SK-N-SH (cell line): ENCODE measurements at regions of chr4 and their contacts with region 1.

Region 1: DNA sequence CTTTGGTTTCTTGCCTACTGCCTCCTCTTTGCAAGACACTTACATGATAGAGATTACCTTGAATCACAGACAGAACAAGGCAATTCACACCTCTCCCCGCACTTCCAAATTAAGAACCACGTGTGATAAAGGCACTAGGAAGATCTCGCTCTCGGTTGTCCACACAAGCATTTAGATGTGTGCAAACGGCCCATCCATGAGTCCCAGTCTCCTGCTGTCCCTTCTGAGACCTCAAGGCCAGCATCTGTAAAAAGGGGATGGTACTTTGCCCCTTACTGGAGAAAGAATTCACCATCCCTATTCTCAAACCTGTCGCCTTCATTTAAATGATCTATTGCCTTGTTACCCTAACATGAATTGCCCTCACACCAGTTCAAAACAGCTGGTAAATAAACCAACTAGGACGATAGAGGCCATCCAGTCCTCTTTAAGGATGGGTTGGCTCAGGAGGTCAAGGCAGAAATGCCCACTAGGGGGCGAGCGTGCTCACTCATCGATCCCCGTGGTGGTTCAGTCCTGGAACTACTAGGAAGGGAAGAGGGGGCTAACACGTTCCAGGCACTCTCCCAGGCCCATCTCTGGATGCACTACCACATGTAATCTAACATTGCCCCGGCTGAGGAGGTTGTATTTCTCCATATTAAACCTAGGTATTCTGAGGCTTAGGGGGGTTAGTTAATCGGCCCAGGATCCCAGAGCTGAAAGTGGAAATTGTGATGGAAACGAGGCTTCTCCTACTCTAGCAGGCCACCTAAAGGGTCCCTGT is 95.8 kb downstream of the DHX15 start:
- DNase-seq: peak; percentile 82
- H3K4me3 ChIP-seq: no peak overlapping the region
- H3K27ac ChIP-seq: no peak overlapping the region
- H3K4me1 ChIP-seq: no peaks in the 10 kb centered on the region
- H3K27me3 ChIP-seq: no peaks in the 10 kb centered on the region
- CTCF ChIP-seq: peak; percentile 85
- EP300 ChIP-seq: no peak
- RAD21 ChIP-seq: peak; percentile 80

Region 2: GRCh38 chr4:24476282-24476681 is 12.3 kb before region 1 on chr4:
- CTCF ChIA-PET with region 1: interaction called, 42 read pairs
- POLR2A ChIA-PET with region 1: no interaction called
- DNase-seq: peak; percentile 43
- H3K4me3 ChIP-seq: peak overlapping the region in 1 of 2 experiments; percentile 5; a peak in 1 of 4 replicates
- H3K27ac ChIP-seq: no peak overlapping the region
- H3K4me1 ChIP-seq: no peaks in the 10 kb centered on the region; a peak in 1 of 4 replicates
- H3K27me3 ChIP-seq: peaks cover 4% of the 10 kb centered on the region; the same call in 1 of the 2 replicates
- CTCF ChIP-seq: peak; percentile 65
- EP300 ChIP-seq: no peak
- RAD21 ChIP-seq: no peak

Region 3: GRCh38 chr4:24511371-24512063 is 22.9 kb after region 1 on chr4:
- CTCF ChIA-PET with region 1: interaction called, 20 read pairs
- POLR2A ChIA-PET with region 1: no interaction called
- DNase-seq: no peak
- H3K4me3 ChIP-seq: no peak overlapping the region
- H3K27ac ChIP-seq: no peak overlapping the region
- H3K4me1 ChIP-seq: no peaks in the 10 kb centered on the region
- H3K27me3 ChIP-seq: no peaks in the 10 kb centered on the region
- CTCF ChIP-seq: no peak
- EP300 ChIP-seq: no peak
- RAD21 ChIP-seq: no peak

Region 4: DNA sequence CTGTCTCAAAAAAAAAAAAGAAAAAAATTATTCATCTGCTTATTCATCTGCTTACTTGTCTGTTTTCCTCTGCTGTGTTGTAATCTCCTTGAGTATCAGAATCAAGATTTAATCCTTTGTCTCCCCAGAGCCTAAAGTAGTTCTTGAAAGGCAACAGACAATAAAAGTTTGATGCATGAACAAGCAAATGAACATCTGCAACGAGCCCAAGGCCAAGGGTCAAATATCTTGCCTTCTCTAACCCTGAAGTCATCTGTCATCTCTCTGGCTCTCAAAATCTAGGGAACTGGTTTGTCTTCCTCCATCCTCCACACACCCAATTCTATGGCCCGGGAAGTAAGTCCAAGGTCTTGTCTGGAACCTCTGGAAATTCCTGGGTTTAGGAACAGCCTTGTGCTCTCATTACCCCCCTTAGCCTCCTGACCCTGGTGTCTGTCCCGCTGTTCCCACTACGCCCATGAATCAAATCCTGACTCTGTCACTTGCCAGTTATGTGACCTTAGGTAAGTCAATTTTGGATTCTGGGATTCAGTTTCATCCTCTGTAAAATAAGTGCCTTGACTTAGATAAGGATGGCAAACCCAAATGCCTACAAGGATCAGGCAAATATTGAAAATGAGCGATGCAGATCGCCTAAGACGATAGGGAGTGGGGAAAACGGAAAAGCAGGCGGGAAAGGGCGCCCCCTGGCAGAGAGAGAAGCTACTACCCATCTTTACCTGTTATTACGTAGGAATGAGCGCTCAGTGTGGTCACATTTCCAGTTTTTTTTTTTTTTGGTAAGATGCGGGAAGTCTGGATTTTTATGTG is 198.5 kb after region 1 on chr4:
- CTCF ChIA-PET with region 1: interaction called, 20 read pairs
- POLR2A ChIA-PET with region 1: no interaction called
- DNase-seq: peak; percentile 26
- H3K4me3 ChIP-seq: peak overlapping the region in 1 of 2 experiments; percentile 41; a peak in 1 of 4 replicates
- H3K27ac ChIP-seq: no peak overlapping the region
- H3K4me1 ChIP-seq: no peaks in the 10 kb centered on the region; a peak in 1 of 4 replicates
- H3K27me3 ChIP-seq: no peaks in the 10 kb centered on the region; the same call in 1 of the 2 replicates
- CTCF ChIP-seq: peak; percentile 57
- EP300 ChIP-seq: no peak
- RAD21 ChIP-seq: peak; percentile 60

Region 5: GRCh38 chr4:24778464-24779225 is 290.1 kb after region 1 on chr4:
- CTCF ChIA-PET with region 1: no interaction called
- POLR2A ChIA-PET with region 1: no interaction called
- DNase-seq: no peak
- H3K4me3 ChIP-seq: no peak overlapping the region
- H3K27ac ChIP-seq: peak overlapping the region; percentile 80 to 87; a peak in 3 of 4 replicates
- H3K4me1 ChIP-seq: peaks cover 3 to 26% of the 10 kb centered on the region in 2 experiments
- H3K27me3 ChIP-seq: no peaks in the 10 kb centered on the region
- CTCF ChIP-seq: no peak
- EP300 ChIP-seq: peak; percentile 10 to 92; a peak in 2 of 4 replicates
- RAD21 ChIP-seq: no peak